Natural killer cell (primary cell): ENCODE measurements at regions of chr1 and their contacts with region 1.

Region 1: DNA sequence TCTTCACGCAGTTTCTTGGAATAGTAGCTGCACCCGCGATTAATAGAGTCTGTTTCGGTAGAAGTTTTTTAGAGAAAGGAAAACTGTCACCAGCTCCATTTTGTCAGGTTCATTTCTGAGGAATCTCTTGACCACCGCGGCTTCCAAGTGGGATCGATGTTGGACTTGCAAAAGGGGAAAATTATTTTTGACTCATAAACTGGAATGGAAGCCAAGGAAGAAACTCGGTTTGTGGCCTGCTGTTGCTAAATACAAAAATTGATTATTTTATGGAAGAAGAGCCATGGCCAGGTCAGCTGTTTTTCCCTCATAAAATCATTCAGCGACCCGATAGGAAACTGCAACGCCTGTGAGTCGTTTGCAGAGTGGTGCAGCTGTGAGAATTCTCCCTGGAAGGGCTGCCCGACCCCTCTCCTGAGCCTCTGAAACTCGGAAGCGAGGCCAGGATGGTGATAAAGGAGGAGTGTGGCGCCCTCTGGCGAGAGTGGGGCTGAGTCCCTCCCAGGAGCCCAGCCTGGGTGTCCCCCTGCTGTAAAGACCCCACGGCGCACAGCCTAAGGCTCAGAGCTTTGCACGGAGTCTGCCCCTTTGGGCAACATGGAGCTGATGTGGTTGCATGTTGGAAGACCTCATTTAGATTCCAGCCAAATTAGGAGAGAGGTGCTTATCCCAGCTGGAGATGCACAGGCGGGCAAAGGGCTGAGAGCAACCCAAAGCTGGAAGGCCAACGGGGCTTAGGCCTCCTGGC is 83.6 kb upstream of the SLC25A33 start:
- DNase-seq: peak; percentile 50 to 82
- ATAC-seq: peak; percentile 36 to 63 (median 57)
- H3K4me3 ChIP-seq: no peak overlapping the region
- H3K4me3 Mint-ChIP-seq: no peak overlapping the region
- H3K27ac ChIP-seq: no peak overlapping the region
- H3K27ac Mint-ChIP-seq: no peak overlapping the region
- H3K4me1 ChIP-seq: no peaks in the 10 kb centered on the region
- H3K4me1 Mint-ChIP-seq: no peaks in the 10 kb centered on the region
- H3K27me3 ChIP-seq: no peaks in the 10 kb centered on the region
- H3K27me3 Mint-ChIP-seq: peaks cover 0 to 8% of the 10 kb centered on the region in 2 donors
- CTCF ChIP-seq: peak; percentile 73

Region 2: GRCh38 chr1:9267352-9267686 is 188.3 kb before region 1 on chr1:
- intact Hi-C with region 1: loop called (anchors 1 kb)
- DNase-seq: no peak
- ATAC-seq: no peak
- H3K4me3 ChIP-seq: no peak overlapping the region
- H3K4me3 Mint-ChIP-seq: no peak overlapping the region
- H3K27ac ChIP-seq: no peak overlapping the region
- H3K27ac Mint-ChIP-seq: no peak overlapping the region
- H3K4me1 ChIP-seq: peaks cover 5% of the 10 kb centered on the region
- H3K4me1 Mint-ChIP-seq: peaks cover 0 to 5% of the 10 kb centered on the region in 2 donors
- H3K27me3 ChIP-seq: no peaks in the 10 kb centered on the region
- H3K27me3 Mint-ChIP-seq: no peaks in the 10 kb centered on the region
- CTCF ChIP-seq: peak; percentile 59

Region 3: DNA sequence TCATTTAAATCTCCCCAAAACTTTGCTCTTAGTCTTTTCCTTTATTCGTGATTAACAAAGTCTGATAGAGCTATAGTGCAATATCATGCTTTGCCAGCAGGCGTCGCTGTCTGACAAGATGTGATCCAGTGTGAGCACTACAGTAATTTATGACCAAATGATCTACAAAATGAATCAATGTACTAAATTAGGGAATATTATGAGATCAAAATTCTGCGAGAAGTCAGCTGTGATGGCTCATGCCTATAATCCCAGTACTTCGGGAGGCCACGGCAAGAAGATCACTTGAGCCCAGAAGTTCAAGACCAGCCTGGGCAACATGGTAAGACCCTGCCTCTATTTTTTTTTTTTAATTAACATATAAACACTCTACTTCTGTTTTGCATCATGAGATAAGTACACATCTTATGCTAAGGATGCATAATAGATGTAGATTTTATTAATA is 166.5 kb before region 1 on chr1:
- intact Hi-C with region 1: loop called (anchors 1 kb)
- DNase-seq: peak; percentile 76 to 89
- ATAC-seq: peak; percentile 32 to 56 (median 32)
- H3K4me3 ChIP-seq: no peak overlapping the region
- H3K4me3 Mint-ChIP-seq: peak overlapping the region; percentile 21
- H3K27ac ChIP-seq: no peak overlapping the region
- H3K27ac Mint-ChIP-seq: no peak overlapping the region
- H3K4me1 ChIP-seq: peaks cover 8% of the 10 kb centered on the region
- H3K4me1 Mint-ChIP-seq: peaks cover 14 to 29% of the 10 kb centered on the region in 2 donors
- H3K27me3 ChIP-seq: no peaks in the 10 kb centered on the region
- H3K27me3 Mint-ChIP-seq: no peaks in the 10 kb centered on the region
- CTCF ChIP-seq: peak; percentile 95